ENCODE measurements at regions of chr11 and their contacts with region 1.

Region 1: DNA sequence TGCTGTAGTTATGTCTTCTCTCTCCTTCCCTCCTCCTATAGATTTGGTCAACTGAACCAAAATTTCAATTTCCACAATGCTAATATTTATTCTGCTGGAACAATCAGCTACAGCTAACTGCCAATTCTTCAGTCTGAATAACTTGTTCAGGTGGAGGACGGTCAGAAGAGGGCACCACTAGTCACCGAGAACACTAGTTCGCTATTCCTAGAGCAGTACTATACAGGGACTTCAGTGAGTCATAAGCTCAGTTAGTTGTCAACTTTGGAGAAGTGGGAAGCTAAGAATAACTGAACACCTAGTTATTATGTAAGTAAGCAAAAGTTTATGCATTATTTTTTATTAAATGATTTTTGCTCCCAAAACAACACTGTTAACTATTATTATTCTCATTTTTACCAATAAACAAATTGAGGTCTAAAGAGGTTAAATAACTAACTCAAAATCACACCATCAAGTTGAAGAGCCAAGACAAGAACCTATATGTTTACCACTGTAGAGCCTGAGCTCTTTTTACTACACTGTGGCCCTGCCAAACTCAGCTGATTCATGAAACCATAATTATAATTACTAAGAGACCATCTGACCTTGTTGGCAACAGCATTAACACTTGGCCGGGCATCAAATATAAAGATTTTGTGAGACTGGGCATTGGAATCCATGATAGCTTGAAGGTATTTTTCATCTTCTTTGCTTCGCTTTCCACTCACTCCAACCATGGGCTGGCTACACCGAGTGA is 59.0 kb downstream of the CEP57 start:
- DNase-seq: peak; percentile 67
- H3K4me3 ChIP-seq: no peak overlapping the region
- H3K27ac ChIP-seq: no peak overlapping the region
- H3K4me1 ChIP-seq: no peaks in the 10 kb centered on the region
- H3K27me3 ChIP-seq: no peaks in the 10 kb centered on the region
- CTCF ChIP-seq: peak; percentile 47 to 53

Region 2: GRCh38 chr11:95778699-95779098 is 70.6 kb before region 1 on chr11:
- CTCF ChIA-PET with region 1: no interaction called
- dilution Hi-C with region 1: no loop called
- in situ Hi-C with region 1: no loop called
- intact Hi-C with region 1: no loop called
- DNase-seq: no peak
- H3K4me3 ChIP-seq: no peak overlapping the region
- H3K27ac ChIP-seq: no peak overlapping the region
- H3K4me1 ChIP-seq: no peaks in the 10 kb centered on the region
- H3K27me3 ChIP-seq: no peaks in the 10 kb centered on the region
- CTCF ChIP-seq: no peak

Region 3: GRCh38 chr11:95923728-95924413 is 74.6 kb after region 1 on chr11 and contains the start of gene MTMR2:
- CTCF ChIA-PET with region 1: interaction called, 5 read pairs
- dilution Hi-C with region 1: no loop called
- in situ Hi-C with region 1: no loop called
- intact Hi-C with region 1: loop called (anchors 1 kb)
- DNase-seq: peak; percentile 66
- H3K4me3 ChIP-seq: peak within 1 kb of the TSS; percentile 69 to 98 (median 70)
- H3K27ac ChIP-seq: peak within 1 kb of the TSS; percentile 90
- H3K4me1 ChIP-seq: peaks cover 8% of the 10 kb centered on the region
- H3K27me3 ChIP-seq: no peaks in the 10 kb centered on the region
- CTCF ChIP-seq: peak in 1 of 2 donors; percentile 2
- total RNA-seq, gene MTMR2: 47.2 to 50.7 TPM

Region 4: GRCh38 chr11:95968585-95968984 is 119.3 kb after region 1 on chr11:
- CTCF ChIA-PET with region 1: no interaction called
- dilution Hi-C with region 1: no loop called
- in situ Hi-C with region 1: no loop called
- intact Hi-C with region 1: loop called (anchors 1 kb)
- DNase-seq: no peak
- H3K4me3 ChIP-seq: no peak overlapping the region
- H3K27ac ChIP-seq: no peak overlapping the region
- H3K4me1 ChIP-seq: no peaks in the 10 kb centered on the region
- H3K27me3 ChIP-seq: no peaks in the 10 kb centered on the region
- CTCF ChIP-seq: peak; percentile 5 to 34

Region 5: DNA sequence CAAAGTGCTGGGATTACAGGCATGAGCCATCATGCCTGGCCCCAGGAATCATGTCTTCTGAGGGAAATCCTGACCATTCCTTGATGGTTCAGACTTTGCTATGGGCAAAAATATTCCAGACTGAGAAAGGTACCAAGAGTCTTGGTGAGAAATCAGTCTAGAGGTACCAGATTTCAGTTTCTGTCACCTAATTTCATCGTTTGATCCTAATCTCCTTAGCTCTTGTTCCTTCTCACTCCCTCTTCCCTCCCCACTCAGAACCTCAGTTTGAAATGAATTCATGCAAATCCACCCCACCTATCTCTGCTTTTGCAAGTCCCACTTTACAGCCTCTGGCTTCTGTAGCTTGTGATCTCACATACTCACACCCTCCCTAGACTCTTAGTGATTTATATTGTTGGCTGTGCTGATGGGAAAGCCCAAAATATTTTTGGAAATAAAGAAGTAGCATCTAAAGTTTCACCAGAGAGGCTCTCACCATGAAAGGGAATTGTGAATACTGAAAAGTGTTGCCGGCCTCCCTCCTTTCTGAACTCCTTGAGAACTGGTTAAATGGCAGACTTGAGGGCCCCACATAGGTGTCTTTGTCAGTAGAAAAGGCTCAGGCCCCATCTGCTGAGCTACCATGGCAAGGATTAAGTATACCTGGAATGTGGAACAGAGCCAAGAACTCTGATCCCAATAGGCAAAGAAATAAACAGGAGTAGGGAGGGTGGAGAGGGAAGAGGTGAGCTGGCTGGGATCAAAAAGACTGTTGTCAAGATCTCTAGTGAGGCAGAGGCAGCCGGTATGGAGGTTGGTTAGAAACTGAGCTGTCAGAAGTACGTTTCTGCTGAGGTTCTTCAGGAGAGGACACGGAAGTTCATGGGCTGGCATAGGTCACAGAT is 265.2 kb after region 1 on chr11:
- CTCF ChIA-PET with region 1: interaction called, 13 read pairs
- dilution Hi-C with region 1: no loop called
- in situ Hi-C with region 1: no loop called
- intact Hi-C with region 1: no loop called
- DNase-seq: peak; percentile 40
- H3K4me3 ChIP-seq: no peak overlapping the region
- H3K27ac ChIP-seq: no peak overlapping the region
- H3K4me1 ChIP-seq: peaks cover 25% of the 10 kb centered on the region
- H3K27me3 ChIP-seq: no peaks in the 10 kb centered on the region
- CTCF ChIP-seq: no peak

Region 6: GRCh38 chr11:96242971-96243647 is 393.9 kb after region 1 on chr11:
- CTCF ChIA-PET with region 1: no interaction called
- dilution Hi-C with region 1: no loop called
- in situ Hi-C with region 1: no loop called
- intact Hi-C with region 1: loop called (anchors 5 kb)
- DNase-seq: peak; percentile 92
- H3K4me3 ChIP-seq: peak overlapping the region; percentile 25 to 31 (median 30)
- H3K27ac ChIP-seq: peak overlapping the region; percentile 74
- H3K4me1 ChIP-seq: peaks cover 40% of the 10 kb centered on the region
- H3K27me3 ChIP-seq: no peaks in the 10 kb centered on the region
- CTCF ChIP-seq: no peak